AG04449 (cell line): ENCODE measurements at regions of chr21 and their contacts with region 1.

Region 1: GRCh38 chr21:36319765-36320420 is at the start of gene MORC3:
- DNase-seq: peak; percentile 93
- H3K4me3 ChIP-seq: peak within 1 kb of the TSS; percentile 84
- CTCF ChIP-seq: no peak

Region 2: DNA sequence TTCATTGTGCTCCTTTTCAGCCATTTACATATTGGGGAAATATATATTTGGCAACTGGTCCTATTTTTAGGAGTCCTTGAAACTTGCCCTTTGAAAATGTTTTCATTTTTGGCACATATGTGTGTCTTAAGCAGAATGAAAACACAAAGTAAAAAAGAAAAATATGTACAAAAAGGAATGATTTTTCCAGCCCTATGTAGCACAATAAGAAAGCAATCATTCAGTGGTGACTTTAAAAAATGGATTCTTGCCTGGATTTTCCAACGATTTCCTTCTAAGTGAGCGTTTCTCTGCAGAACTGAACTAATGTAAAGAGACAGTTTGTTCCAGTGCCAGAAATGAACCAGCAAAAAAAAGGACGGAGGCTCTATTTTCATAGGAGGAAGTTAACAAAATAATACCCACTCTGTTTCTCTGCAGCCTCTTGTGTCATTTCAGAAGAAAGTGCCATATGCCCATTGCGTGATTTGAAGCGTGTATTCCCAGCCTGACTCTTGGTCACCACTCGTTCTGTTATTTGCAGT is 599.6 kb before region 1 on chr21:
- CTCF ChIA-PET with region 1: no interaction called
- POLR2A ChIA-PET with region 1: no interaction called
- DNase-seq: no peak
- H3K4me3 ChIP-seq: no peak overlapping the region
- CTCF ChIP-seq: no peak

Region 3: DNA sequence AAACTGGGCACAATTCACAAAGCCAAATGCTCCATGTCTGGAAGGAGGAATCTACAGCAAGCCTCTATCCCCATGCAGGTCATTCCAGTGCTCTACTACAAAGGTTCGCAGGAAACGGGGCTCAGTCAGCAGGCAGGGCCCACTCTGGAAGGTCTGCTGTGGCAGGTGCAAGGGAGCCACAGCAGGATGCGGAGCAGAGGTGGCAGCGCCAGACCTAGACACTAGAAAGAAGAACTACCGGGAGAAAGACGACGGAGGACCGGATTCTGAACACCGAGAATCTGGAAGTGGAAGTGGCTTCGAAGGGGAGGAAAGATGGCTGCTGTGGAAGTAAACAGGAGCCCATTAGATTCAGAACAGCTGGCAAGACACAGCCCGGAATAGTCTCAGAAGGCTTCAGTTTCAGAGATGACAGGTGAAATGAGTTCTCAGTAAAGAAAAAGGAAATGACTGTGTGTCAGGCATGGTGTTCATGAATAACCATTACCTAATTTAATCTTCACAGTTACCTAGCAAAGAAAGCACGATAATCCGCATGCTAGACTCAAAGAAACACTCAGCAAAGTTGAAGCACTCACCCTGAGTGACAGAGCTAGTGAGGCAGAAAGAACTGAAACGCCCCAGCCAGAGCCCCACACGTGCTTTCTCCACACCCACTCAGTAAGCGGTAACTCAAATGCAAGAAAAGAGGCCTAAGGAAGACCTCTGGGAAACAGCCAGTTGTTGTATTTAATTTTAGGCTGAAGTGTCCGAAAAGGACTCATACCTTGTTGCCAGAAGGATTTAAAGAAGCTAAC is 281.0 kb before region 1 on chr21:
- CTCF ChIA-PET with region 1: no interaction called
- POLR2A ChIA-PET with region 1: no interaction called
- DNase-seq: no peak
- H3K4me3 ChIP-seq: no peak overlapping the region
- CTCF ChIP-seq: no peak

Region 4: GRCh38 chr21:36135391-36136102 is 184.3 kb before region 1 on chr21:
- CTCF ChIA-PET with region 1: interaction called, 7 read pairs
- POLR2A ChIA-PET with region 1: interaction called, 10 read pairs
- DNase-seq: no peak
- H3K4me3 ChIP-seq: peak overlapping the region; percentile 76
- CTCF ChIP-seq: no peak

Region 5: GRCh38 chr21:36330904-36331303 is 11.0 kb after region 1 on chr21:
- CTCF ChIA-PET with region 1: interaction called, 42 read pairs
- POLR2A ChIA-PET with region 1: interaction called, 4 read pairs
- DNase-seq: no peak
- H3K4me3 ChIP-seq: no peak overlapping the region
- CTCF ChIP-seq: peak; percentile 73